ENCODE measurements at regions of chr13 and their contacts with region 1.

Region 1: DNA sequence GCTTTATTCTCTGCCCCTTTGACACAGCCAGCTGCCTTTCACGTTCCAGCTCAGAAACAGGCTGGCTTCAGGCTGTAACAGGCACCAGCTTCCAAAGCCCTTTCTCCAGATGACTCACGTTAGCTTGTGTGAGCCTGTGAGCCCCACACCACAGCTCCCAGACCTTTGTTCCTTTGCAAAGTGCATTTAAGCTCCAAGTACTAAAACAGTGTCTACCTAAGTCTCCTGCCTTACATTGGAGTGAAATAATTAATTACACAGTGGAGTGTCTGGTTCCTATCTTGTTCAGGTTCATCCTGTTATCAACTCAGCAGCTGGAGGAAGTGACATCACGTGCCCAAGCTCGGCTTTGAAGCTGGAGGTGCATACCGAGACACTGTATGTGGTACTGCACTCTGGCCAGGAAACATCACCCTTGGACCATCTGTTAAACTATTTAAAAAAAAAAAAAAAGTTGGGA is 475.8 kb downstream of the FOXO1 start:
- DNase-seq: peak; percentile 77
- H3K4me3 Mint-ChIP-seq: peak overlapping the region; percentile 31
- H3K27ac Mint-ChIP-seq: peak overlapping the region; percentile 96
- H3K4me1 Mint-ChIP-seq: peaks cover 60% of the 10 kb centered on the region
- H3K27me3 Mint-ChIP-seq: no peaks in the 10 kb centered on the region

Region 2: GRCh38 chr13:40206241-40207000 is 15.8 kb after region 1 on chr13:
- CTCF ChIA-PET with region 1: interaction called, 11 read pairs
- POLR2A ChIA-PET with region 1: interaction called, 39 read pairs
- DNase-seq: peak; percentile 44
- H3K4me3 Mint-ChIP-seq: peak overlapping the region; percentile 31
- H3K27ac Mint-ChIP-seq: peak overlapping the region; percentile 96
- H3K4me1 Mint-ChIP-seq: peaks cover 31% of the 10 kb centered on the region
- H3K27me3 Mint-ChIP-seq: no peaks in the 10 kb centered on the region

Region 3: GRCh38 chr13:40221460-40222201 is 31.0 kb after region 1 on chr13:
- CTCF ChIA-PET with region 1: no interaction called
- POLR2A ChIA-PET with region 1: interaction called, 17 read pairs
- DNase-seq: peak; percentile 42
- H3K4me3 Mint-ChIP-seq: peak overlapping the region; percentile 5
- H3K27ac Mint-ChIP-seq: peak overlapping the region; percentile 74
- H3K4me1 Mint-ChIP-seq: peaks cover 31% of the 10 kb centered on the region
- H3K27me3 Mint-ChIP-seq: no peaks in the 10 kb centered on the region

Measured in activated CD4-positive, alpha-beta memory T cell treated with anti-CD3 and anti-CD28 coated beads, Interleukin-2, amount 10 ng/mL, durations not matched to agents 7 days and 5 days (primary cell).